ENCODE measurements at regions of chr4 and their contacts with region 1.

Region 1: GRCh38 chr4:153643406-153644383 is 40.4 kb upstream of the TLR2 start:
- DNase-seq: peak; percentile 10

Region 2: GRCh38 chr4:153249199-153250041 is 394.3 kb before region 1 on chr4:
- in situ Hi-C with region 1: loop called (anchors 10 kb)
- DNase-seq: peak; percentile 84

Region 3: GRCh38 chr4:153603258-153603657 is 40.4 kb before region 1 on chr4:
- in situ Hi-C with region 1: no loop called
- DNase-seq: no peak

Region 4: GRCh38 chr4:153731239-153731638 is 87.5 kb after region 1 on chr4:
- in situ Hi-C with region 1: no loop called
- DNase-seq: no peak

Measured in G401 (cell line).